ENCODE measurements at regions of chr18 and their contacts with region 1.

Region 1: DNA sequence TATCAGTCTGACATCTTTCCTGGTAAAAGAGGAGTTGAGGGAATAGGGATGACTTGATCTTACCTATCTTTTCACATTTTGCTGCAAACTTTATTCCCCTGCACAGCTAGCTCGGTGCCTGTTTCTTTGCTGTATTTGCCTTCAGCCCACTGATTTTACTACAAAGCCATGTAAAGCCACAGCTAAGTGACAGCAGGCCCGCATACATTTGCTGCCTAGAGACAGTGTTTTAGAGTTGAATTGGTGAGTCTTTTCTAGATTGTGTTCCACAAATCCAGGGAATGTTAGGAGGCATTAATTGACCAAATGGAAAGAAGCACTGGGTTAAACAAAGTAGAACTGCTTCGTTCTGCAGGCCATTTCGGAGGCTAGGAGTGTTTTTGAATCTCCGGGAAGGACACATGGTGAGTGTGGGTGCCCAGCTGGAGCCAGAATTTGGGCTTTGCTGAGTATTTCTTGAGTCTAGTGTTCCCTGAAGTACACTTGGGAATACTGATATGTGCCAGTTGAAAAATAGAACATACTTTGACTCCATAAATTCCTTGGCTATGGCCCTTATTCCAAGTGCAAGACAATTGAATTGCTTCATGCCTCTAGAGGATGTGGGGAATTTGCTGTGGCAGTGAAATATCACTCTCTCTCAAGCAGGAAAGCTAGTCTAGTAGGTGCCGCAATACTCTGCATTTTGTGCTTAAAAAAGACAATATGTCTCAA is 329.8 kb downstream of the PTPRM start:
- DNase-seq: no peak
- H3K4me3 ChIP-seq: no peak overlapping the region
- H3K4me3 Mint-ChIP-seq: no peak overlapping the region
- H3K27ac ChIP-seq: no peak overlapping the region
- H3K27ac Mint-ChIP-seq: no peak overlapping the region
- H3K4me1 ChIP-seq: no peaks in the 10 kb centered on the region
- H3K4me1 Mint-ChIP-seq: no peaks in the 10 kb centered on the region
- H3K27me3 ChIP-seq: no peaks in the 10 kb centered on the region
- H3K27me3 Mint-ChIP-seq: no peaks in the 10 kb centered on the region

Region 2: GRCh38 chr18:7830468-7830867 is 66.5 kb before region 1 on chr18:
- CTCF ChIA-PET with region 1: no interaction called
- POLR2A ChIA-PET with region 1: no interaction called
- intact Hi-C with region 1: loop called (anchors 10 kb)
- DNase-seq: no peak
- H3K4me3 ChIP-seq: no peak overlapping the region
- H3K4me3 Mint-ChIP-seq: no peak overlapping the region
- H3K27ac ChIP-seq: no peak overlapping the region
- H3K27ac Mint-ChIP-seq: no peak overlapping the region
- H3K4me1 ChIP-seq: no peaks in the 10 kb centered on the region
- H3K4me1 Mint-ChIP-seq: no peaks in the 10 kb centered on the region
- H3K27me3 ChIP-seq: no peaks in the 10 kb centered on the region
- H3K27me3 Mint-ChIP-seq: no peaks in the 10 kb centered on the region